Transverse colon (tissue), 4 donors: ENCODE measurements at regions of chr5 and their contacts with region 1.

Region 1: DNA sequence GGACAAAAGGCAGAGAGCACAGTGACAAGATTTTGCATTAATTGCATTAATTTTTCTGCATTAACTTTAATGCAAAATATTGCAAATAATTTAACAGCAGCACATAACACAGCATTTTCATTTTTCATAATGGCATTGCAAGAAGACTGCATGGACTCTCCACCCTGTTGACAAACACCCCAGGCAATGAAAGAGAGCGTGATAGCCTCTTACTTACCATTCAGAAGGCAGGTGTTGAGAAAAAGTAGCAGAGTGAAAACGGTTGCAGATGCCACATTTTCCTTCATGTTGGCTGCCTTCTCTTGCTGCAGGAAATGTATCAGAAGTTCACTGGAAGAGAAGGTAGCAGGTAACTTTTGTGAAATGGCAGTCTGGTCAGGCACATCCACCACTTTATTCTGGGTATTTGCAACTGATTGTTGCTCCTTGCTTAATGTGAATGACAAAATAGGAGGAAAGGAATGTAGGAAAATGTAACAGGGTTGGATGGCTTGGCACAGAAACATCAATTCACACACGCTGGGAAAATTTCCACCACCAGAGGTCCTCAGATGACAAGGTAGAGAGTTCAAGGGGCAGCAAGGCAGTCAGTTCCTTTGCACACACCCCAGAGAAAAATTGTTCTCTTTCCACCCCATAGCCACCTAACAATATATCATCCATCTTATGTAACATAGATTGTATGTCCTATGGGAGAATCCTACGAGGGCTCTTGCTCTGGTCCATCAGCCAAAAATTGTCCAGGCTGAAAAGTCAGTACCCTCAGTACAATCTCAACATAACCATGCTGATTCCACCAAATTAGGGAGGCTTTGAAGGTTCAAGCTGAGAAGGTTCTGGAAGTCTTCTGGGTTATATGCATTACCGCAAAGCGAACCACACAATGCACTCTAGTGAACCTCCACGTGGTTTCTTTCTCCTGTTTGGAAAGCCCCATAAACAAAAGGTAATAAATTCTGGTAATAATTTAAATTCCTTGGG is 41.9 kb upstream of the AGXT2 start:
- DNase-seq: peak; percentile 72
- H3K4me3 ChIP-seq: no peak overlapping the region
- H3K27ac ChIP-seq: no peak overlapping the region
- H3K4me1 ChIP-seq: peaks cover 0 to 19% (median 3%) of the 10 kb centered on the region in 4 donors
- H3K27me3 ChIP-seq: no peaks in the 10 kb centered on the region
- CTCF ChIP-seq: peak; percentile 53 to 81 (median 71)
- EP300 ChIP-seq: no peak
- POLR2A ChIP-seq: no peak

Region 2: GRCh38 chr5:35198075-35198474 is 108.5 kb after region 1 on chr5:
- in situ Hi-C with region 1: loop called in 1 of 4 experiments (anchors 5 kb)
- intact Hi-C with region 1: no loop called
- DNase-seq: peak; percentile 74
- H3K4me3 ChIP-seq: no peak overlapping the region
- H3K27ac ChIP-seq: peak overlapping the region; percentile 9 to 71 (median 44)
- H3K4me1 ChIP-seq: peaks cover 12 to 63% (median 38%) of the 10 kb centered on the region in 4 donors
- H3K27me3 ChIP-seq: no peaks in the 10 kb centered on the region
- CTCF ChIP-seq: no peak
- EP300 ChIP-seq: no peak
- POLR2A ChIP-seq: no peak

Region 3: GRCh38 chr5:35436410-35437057 is 346.9 kb after region 1 on chr5:
- in situ Hi-C with region 1: loop called in 2 of 4 experiments (anchors 10 to 25 kb)
- intact Hi-C with region 1: no loop called
- DNase-seq: no peak
- H3K4me3 ChIP-seq: no peak overlapping the region
- H3K27ac ChIP-seq: no peak overlapping the region
- H3K4me1 ChIP-seq: no peaks in the 10 kb centered on the region
- H3K27me3 ChIP-seq: no peaks in the 10 kb centered on the region
- CTCF ChIP-seq: peak; percentile 42 to 60 (median 47)
- EP300 ChIP-seq: no peak
- POLR2A ChIP-seq: no peak

Region 4: DNA sequence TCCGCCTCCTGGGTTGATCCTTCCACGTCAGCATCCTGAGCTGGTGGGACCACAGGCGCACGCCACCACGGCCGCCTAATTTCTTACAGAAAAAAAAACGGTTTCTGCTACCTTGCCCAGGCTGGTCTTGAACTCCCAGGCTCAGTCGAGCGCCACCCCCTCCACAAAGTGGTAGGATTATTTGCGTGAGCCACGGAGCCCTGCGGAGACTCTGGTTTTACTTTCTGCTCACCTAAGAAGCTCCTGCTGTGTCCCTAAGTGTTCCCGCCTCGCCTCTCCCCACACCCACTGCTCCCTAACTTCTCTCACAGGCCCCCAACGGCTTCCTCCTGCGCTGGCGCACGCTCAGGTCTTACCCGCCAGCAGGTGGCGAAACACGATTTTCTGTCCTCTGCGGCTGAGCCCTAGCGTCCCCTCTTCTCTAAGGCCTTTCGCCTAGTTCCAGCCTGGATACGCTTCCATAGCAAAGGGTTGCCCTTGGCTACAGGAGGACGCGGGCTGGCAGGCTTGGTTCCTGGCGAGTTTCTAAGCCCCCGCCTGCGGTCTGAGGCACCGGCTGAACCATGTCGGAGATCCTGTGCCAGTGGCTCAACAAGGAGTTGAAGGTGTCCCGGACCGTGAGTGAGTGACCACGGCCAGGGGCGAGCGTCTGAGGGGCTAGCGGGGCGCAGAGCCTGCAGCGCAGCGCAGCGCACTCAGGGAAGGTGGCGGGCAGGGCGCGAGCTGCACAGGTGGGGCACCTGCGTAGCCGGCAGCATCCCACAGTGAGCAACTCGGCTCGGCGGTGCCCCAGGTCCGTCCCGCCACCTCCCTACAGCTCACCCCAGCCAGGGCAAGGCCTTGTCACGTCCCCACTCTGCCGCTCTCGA is 528.0 kb after region 1 on chr5 and contains the start of gene SPEF2:
- in situ Hi-C with region 1: loop called in 1 of 4 experiments (anchors 25 kb)
- intact Hi-C with region 1: no loop called
- DNase-seq: peak; percentile 84
- H3K4me3 ChIP-seq: peak within 1 kb of the TSS; percentile 54 to 63 (median 58)
- H3K27ac ChIP-seq: peak within 1 kb of the TSS in 3 of 4 donors; percentile 27 to 63 (median 32)
- H3K4me1 ChIP-seq: peaks cover 4 to 14% (median 5%) of the 10 kb centered on the region in 4 donors
- H3K27me3 ChIP-seq: no peaks in the 10 kb centered on the region
- CTCF ChIP-seq: peak; percentile 59 to 82 (median 74)
- EP300 ChIP-seq: no peak
- POLR2A ChIP-seq: no peak
- total RNA-seq, gene SPEF2: 2.4 to 9.4 (median 5.1) TPM in 3 of 4 donors, not detected in the other

Region 5: DNA sequence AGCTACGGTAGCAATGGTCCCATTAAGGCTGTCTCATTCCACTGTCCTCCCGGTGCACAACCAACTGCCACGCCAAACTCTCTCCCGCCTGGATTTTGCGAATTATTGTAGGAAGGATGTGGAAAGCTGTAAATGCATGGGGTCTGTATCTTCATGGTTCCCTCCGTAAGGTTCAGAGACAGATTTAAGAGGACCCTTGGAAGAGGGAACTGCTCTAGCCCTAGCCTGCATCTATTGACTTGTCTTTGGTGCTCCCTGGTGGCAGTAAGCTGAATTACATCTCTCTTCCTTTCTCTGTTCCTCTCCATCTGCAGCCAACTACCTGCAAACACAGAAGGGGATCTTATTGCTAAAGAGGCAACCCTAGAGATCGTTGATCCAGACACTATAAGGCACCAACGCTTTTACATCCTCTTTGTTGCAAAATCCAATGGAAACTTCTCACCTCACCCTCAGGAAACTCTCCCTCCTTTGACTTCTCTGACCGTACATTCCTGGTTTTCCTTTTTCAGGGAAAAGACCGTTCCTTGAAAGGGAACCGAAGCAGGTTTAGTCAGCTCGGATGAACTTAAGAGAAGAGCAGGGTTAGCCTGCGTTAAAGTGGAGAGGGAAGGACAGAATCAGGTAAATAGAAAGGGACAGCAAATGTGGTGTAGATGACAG is 836.9 kb after region 1 on chr5:
- in situ Hi-C with region 1: loop called (anchors 10 to 25 kb)
- intact Hi-C with region 1: no loop called
- DNase-seq: peak; percentile 26
- H3K4me3 ChIP-seq: no peak overlapping the region
- H3K27ac ChIP-seq: no peak overlapping the region
- H3K4me1 ChIP-seq: peaks cover 0 to 9% (median 4%) of the 10 kb centered on the region in 4 donors
- H3K27me3 ChIP-seq: peaks cover 19% of the 10 kb centered on the region
- CTCF ChIP-seq: peak; percentile 74 to 87 (median 81)
- EP300 ChIP-seq: no peak
- POLR2A ChIP-seq: no peak